Psoas muscle (tissue), 8 donors: ENCODE measurements at regions of chr5 and their contacts with region 1.

Region 1: GRCh38 chr5:147453875-147454814 is 55.7 kb downstream of the DPYSL3 start:
- DNase-seq: peak; percentile 92 to 94
- ATAC-seq: peak; percentile 86 to 90 (median 88)
- H3K4me3 ChIP-seq: peak overlapping the region; percentile 77
- H3K27ac ChIP-seq: peak overlapping the region; percentile 79
- H3K4me1 ChIP-seq: peaks cover 17% of the 10 kb centered on the region
- H3K27me3 ChIP-seq: peaks cover 0 to 8% (median 0%) of the 10 kb centered on the region in 3 donors
- CTCF ChIP-seq: peak; percentile 89

Region 2: GRCh38 chr5:147177125-147177840 is 276.9 kb before region 1 on chr5:
- intact Hi-C with region 1: no loop called
- DNase-seq: no peak
- ATAC-seq: no peak
- H3K4me3 ChIP-seq: no peak overlapping the region
- H3K27ac ChIP-seq: no peak overlapping the region
- H3K4me1 ChIP-seq: no peaks in the 10 kb centered on the region
- H3K27me3 ChIP-seq: no peaks in the 10 kb centered on the region
- CTCF ChIP-seq: no peak

Region 3: DNA sequence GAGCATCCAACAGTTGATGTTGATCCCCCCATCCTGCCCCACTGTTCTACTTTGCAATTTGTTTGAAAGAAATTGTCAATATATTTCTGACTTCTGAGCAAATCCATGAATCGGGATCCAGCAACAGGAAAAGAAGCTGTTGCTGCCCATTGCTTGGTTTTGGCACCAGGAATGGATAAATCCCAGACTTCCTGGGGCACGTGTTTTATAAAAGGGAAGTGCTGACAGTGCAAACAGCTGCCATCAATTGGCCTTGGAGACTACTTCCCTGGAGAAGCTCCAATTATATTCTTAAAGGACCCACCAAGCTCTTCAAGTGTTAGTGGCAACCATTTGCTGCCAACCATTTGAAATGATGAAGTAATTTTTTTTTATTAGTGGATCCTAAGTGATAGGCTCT is 205.6 kb before region 1 on chr5:
- intact Hi-C with region 1: no loop called
- DNase-seq: no peak
- ATAC-seq: peak in 1 of 4 donors; percentile 27
- H3K4me3 ChIP-seq: no peak overlapping the region
- H3K27ac ChIP-seq: no peak overlapping the region
- H3K4me1 ChIP-seq: no peaks in the 10 kb centered on the region
- H3K27me3 ChIP-seq: no peaks in the 10 kb centered on the region
- CTCF ChIP-seq: no peak

Region 4: DNA sequence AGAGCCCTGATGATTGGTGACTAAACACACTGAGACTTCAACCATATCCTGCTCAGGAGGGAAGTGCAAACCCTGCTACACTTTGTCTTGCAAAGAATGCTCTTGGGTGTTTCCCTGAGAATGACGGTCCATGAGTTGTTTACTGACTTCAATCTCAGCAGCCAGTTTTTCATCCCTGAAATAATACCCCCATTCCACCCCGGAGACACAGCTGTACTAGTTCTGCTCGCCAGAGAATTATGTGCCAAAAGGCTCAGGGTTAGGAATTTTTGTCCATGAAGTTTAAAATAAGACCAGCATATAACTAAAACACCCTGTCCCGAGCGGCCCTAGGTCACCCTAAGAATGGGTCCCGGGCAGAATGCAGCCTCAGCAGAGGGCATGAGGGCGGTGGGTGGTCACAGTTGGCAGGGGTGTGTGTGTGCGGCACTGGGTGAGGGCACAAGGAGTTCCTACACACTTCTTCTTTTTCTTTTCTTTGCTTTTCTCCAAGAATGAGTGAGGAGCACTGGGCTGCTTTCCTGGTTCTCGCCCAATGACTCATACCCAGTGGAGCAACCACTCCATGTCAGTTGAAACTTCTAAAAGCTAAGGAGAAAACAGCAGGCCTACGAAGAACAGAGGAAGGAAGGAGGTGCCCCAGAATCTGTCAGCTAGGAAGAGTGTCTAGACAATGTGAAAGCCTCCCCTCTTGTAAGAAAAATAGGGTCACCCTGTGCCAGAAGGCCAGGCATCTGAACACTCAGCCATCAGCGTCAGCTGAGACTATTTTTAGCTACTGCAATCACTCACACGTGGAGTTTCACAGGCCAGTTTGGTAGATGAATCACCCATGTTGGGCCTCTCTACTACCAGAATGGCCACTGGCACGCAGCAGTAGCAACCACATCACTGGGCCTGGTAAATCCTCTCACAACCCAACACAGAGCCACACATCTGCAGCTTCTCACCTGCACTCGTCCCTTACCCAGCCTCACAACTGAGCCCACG is 50.2 kb before region 1 on chr5:
- intact Hi-C with region 1: no loop called
- DNase-seq: peak; percentile 63 to 74
- ATAC-seq: peak; percentile 93 to 96 (median 95)
- H3K4me3 ChIP-seq: peak overlapping the region; percentile 4
- H3K27ac ChIP-seq: peak overlapping the region; percentile 87
- H3K4me1 ChIP-seq: peaks cover 22% of the 10 kb centered on the region
- H3K27me3 ChIP-seq: no peaks in the 10 kb centered on the region
- CTCF ChIP-seq: no peak

Region 5: GRCh38 chr5:147509710-147510651 is 55.8 kb after region 1 on chr5 and contains the start of gene DPYSL3:
- intact Hi-C with region 1: loop called in 1 of 2 experiments (anchors 2 kb)
- DNase-seq: peak; percentile 81 to 86
- ATAC-seq: peak; percentile 86 to 98 (median 96)
- H3K4me3 ChIP-seq: peak within 1 kb of the TSS; percentile 78
- H3K27ac ChIP-seq: peak within 1 kb of the TSS; percentile 49
- H3K4me1 ChIP-seq: no peaks in the 10 kb centered on the region
- H3K27me3 ChIP-seq: peaks cover 0 to 14% (median 2%) of the 10 kb centered on the region in 3 donors
- CTCF ChIP-seq: peak; percentile 26
- total RNA-seq, gene DPYSL3: 18.0 to 58.5 (median 38.4) TPM

Region 6: DNA sequence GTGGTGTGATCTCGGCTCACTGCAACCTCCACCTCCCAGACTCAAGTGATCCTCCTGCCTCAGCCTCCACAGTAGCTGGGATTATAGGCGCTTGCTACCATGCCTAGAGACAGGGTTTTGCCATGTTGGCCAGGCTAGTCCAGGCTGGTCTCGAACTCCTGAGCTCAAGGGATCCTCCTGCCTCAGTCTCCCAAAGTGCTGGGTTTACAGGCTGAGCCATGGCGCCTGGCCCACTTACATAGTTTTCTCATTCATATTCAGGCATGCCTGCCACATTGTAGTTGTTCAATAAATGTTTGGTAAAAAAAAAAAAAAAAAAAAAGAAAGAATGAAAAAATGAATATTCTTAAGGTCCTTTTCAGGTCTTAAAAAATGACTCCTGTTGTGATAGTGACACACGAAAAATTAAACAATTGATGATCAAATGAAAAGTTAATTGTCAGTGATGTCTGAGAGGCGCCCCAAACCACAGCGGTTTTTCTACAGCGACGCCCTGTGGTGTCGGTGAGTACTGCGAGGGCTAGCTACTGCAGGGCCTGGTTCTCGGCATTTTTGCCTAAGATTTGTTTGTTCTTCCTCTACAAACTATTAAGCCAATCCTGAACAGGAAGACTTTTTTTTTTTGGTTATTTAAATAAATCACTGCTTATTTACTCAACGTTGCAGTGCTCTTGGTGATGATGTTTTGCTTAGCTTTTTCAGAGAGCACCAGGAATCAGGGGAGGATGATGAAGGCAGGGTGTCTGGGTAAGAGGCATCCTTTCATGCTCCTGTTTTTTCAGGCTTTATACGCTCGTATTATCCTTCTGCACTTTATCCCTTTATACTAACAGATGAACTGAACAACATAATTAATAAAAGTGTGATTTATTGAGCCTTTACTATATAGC is 122.7 kb after region 1 on chr5:
- intact Hi-C with region 1: loop called (anchors 5 kb)
- DNase-seq: peak; percentile 58 to 78
- ATAC-seq: peak in 2 of 4 donors; percentile 63 to 70
- H3K4me3 ChIP-seq: no peak overlapping the region
- H3K27ac ChIP-seq: no peak overlapping the region
- H3K4me1 ChIP-seq: no peaks in the 10 kb centered on the region
- H3K27me3 ChIP-seq: no peaks in the 10 kb centered on the region
- CTCF ChIP-seq: peak; percentile 79